Esophagus muscularis mucosa (tissue), 4 donors: ENCODE measurements at regions of chr2 and their contacts with region 1.

Region 1: GRCh38 chr2:174688079-174688478 is 76.2 kb downstream of the CHRNA1 start:
- DNase-seq: no peak
- H3K4me3 ChIP-seq: no peak overlapping the region
- H3K27ac ChIP-seq: no peak overlapping the region
- H3K4me1 ChIP-seq: peaks cover 4 to 11% (median 6%) of the 10 kb centered on the region in 4 donors
- H3K27me3 ChIP-seq: peaks cover 0 to 4% (median 0%) of the 10 kb centered on the region in 4 donors
- CTCF ChIP-seq: peak; percentile 51 to 58 (median 52)
- EP300 ChIP-seq: no peak
- POLR2A ChIP-seq: no peak

Region 2: GRCh38 chr2:174465327-174465726 is 222.8 kb before region 1 on chr2:
- intact Hi-C with region 1: loop called (anchors 5 kb)
- DNase-seq: no peak
- H3K4me3 ChIP-seq: no peak overlapping the region
- H3K27ac ChIP-seq: no peak overlapping the region
- H3K4me1 ChIP-seq: peaks cover 0 to 3% (median 0%) of the 10 kb centered on the region in 4 donors
- H3K27me3 ChIP-seq: no peaks in the 10 kb centered on the region
- CTCF ChIP-seq: no peak
- EP300 ChIP-seq: no peak
- POLR2A ChIP-seq: no peak

Region 3: DNA sequence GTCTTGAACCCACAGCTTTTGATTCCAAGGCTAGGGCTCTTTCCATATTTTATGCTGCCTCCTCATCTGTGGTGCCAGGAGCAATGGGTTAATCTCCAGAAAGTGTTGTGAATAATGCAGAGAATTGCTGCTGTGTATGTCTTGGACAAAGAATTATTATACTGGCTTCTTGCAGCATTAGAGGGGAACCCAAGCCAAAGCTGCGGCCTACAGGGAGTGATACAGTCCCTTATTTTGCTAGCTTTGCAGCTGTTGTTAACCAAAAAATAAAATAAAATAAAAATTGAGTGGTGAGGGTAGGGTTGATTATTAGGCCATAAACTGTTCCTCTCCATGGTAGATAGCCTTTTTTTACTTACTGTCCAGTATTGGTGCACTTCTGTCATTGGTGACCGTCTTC is 107.1 kb before region 1 on chr2:
- intact Hi-C with region 1: loop called (anchors 5 kb)
- DNase-seq: no peak
- H3K4me3 ChIP-seq: no peak overlapping the region
- H3K27ac ChIP-seq: no peak overlapping the region
- H3K4me1 ChIP-seq: peaks cover 0 to 20% (median 5%) of the 10 kb centered on the region in 4 donors
- H3K27me3 ChIP-seq: no peaks in the 10 kb centered on the region
- CTCF ChIP-seq: no peak
- EP300 ChIP-seq: no peak
- POLR2A ChIP-seq: no peak